Activated CD4-positive, alpha-beta memory T cell treated with anti-CD3 and anti-CD28 coated beads, Interleukin-2, amount 10 ng/mL, durations not matched to agents 7 days and 5 days (primary cell): ENCODE measurements at regions of chr16 and their contacts with region 1.

Region 1: DNA sequence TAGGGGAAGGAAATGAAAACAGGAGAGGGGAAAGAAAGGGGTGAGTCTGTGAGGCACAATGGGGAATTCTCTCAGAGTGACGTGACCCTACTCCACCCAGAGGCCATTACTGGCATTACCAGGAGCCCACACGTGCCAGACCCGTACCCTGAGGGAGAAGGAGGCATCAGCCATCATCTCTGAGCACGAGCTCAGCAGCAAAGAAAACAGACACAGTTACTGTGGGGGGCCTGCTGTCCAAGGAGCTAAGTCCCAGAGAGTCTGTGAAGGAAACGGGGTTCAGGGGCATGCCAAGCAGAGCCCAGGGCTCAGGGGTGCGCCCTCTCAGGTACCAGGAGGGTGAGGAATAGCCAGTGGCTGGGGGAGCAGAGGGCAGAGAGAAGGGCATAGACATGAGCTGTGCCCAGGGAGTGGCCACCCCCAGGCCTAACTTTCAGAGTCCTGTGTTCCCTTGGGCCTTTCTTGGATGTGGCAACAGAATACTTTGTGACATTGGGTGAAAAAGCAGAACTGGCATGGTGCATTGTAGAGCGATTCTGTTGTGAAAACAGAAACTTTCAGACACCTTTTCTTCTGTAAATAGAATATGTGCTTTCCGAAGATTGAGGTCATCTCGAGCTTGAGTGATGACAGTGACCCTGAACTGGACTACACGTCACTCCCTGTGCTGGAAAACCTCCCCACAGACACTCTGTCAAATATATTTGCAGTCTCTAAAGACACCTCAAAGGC is 11.3 kb downstream of the TAF1C start:
- DNase-seq: peak; percentile 68
- H3K4me3 Mint-ChIP-seq: no peak overlapping the region
- H3K27ac Mint-ChIP-seq: no peak overlapping the region
- H3K4me1 Mint-ChIP-seq: peaks cover 2% of the 10 kb centered on the region
- H3K27me3 Mint-ChIP-seq: peaks cover 11% of the 10 kb centered on the region

Region 2: GRCh38 chr16:83842756-83843507 is 332.6 kb before region 1 on chr16:
- CTCF ChIA-PET with region 1: no interaction called
- POLR2A ChIA-PET with region 1: no interaction called
- DNase-seq: no peak
- H3K4me3 Mint-ChIP-seq: no peak overlapping the region
- H3K27ac Mint-ChIP-seq: no peak overlapping the region
- H3K4me1 Mint-ChIP-seq: no peaks in the 10 kb centered on the region
- H3K27me3 Mint-ChIP-seq: peaks cover 27% of the 10 kb centered on the region

Region 3: DNA sequence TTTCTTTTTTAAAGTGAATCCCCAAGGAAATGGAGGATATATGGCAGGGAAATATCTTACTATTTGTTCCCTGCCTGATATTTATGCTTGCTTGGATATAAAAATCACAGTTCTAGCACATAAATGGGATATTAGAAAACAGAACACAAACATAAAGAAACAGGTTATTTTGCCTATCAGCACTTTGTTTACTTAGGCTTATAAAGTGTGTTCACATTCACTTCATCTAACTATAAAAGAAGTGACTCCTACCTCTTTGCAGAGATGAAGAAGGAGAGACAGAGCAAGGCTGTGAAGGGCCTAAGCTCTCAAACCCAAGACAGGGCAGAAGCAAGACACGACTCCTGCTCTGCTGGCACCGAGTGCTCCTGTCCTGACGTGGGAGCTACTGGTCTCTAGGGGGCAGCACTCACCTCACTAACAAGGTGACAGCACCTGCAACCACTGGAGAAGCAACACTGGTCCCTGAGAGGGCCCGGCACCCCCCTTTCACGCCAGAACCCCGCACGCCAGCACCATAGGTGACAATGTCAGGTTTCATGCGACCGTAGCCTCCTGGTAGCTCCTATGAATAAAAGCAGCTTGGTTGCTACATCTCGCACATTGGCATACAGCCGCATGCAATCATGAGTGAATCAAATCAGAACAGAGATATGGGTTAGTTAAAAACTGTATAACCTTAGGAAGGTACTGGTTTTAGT is 90.8 kb before region 1 on chr16:
- CTCF ChIA-PET with region 1: interaction called, 49 read pairs
- POLR2A ChIA-PET with region 1: interaction called, 6 read pairs
- DNase-seq: peak; percentile 76
- H3K4me3 Mint-ChIP-seq: no peak overlapping the region
- H3K27ac Mint-ChIP-seq: no peak overlapping the region
- H3K4me1 Mint-ChIP-seq: peaks cover 48% of the 10 kb centered on the region
- H3K27me3 Mint-ChIP-seq: no peaks in the 10 kb centered on the region

Region 4: DNA sequence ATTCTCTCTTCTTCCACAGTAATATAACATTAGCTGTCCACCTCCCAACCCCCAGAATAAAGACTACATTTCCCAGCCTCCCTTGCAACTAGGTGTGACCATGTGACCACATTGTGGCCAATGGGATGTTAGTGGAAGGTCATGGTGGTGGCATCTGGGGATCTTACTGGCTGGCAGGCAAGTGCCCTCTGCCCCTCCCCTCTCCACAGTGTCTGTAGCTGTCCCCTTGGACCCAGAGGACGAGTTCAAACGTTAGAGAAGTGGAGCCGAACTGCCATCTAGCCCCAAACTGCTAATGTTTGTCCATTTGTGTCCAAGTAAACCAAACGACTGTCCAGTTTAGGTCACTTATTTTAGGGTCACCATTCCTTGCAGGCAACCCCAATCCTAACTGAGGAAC is 90.9 kb after region 1 on chr16:
- CTCF ChIA-PET with region 1: no interaction called
- POLR2A ChIA-PET with region 1: no interaction called
- DNase-seq: peak; percentile 24
- H3K4me3 Mint-ChIP-seq: no peak overlapping the region
- H3K27ac Mint-ChIP-seq: no peak overlapping the region
- H3K4me1 Mint-ChIP-seq: no peaks in the 10 kb centered on the region
- H3K27me3 Mint-ChIP-seq: peaks cover 3% of the 10 kb centered on the region